HEK293 (cell line): ENCODE measurements at regions of chr7 and their contacts with region 1.

Region 1: DNA sequence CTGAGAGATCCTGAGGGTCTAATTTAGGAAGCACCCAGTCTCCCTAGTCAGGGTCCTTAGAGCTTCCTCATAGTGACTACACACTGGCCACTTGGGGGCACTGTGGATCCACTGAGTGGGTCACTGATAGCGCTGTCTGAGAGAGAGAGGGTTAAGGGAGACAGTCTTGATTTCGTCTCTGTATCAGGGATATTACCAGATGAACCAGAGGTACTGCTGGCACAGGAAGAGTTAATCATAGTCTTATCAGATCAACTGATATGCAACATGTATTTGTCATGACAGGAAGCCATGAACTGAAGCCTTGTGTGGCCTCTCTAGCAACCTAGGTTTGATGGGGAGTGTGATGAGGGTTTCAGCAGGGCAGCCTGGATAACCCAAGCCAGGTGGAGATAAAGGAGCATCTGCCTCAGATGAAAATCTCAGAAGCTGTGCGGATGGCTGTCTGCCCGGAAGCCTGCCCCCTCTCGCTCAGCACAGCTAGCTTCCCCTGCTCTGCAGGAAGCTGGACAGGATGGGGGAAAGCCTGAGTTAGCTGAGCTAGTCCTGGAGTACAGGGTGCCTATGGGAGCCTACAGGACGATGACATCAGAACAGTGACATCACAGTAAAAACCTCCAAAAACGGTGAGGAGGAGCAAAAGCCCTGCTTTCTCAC is 214.0 kb upstream of the PRSS1 start:
- H3K4me3 ChIP-seq: no peak overlapping the region
- H3K27ac ChIP-seq: no peak overlapping the region
- H3K4me1 ChIP-seq: no peaks in the 10 kb centered on the region
- CTCF ChIP-seq: peak; percentile 76

Region 2: DNA sequence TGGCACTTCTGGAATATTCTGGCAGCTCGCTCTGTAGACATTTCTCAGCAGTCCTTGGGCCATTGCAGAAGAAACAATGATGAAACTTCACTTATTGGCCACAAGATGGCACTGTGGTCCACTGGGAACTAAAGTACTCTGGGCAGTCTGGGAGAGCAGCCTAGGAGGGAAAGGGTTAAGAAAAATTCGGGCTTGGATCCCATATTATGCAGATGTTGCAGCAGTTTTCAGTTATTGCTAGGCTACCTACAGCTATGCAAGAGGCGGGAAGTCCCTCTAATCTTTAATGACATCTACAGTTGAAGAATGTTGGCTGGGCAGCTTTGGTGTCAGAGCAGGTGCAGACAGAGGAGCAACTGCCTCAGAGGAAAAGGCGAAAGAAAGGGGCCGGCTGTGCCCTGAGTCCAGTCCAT is 75.7 kb before region 1 on chr7:
- CTCF ChIA-PET with region 1: interaction called, 10 read pairs
- POLR2A ChIA-PET with region 1: no interaction called
- H3K4me3 ChIP-seq: no peak overlapping the region
- H3K27ac ChIP-seq: no peak overlapping the region
- H3K4me1 ChIP-seq: no peaks in the 10 kb centered on the region
- CTCF ChIP-seq: peak; percentile 59; the same call in 1 of the 2 replicates

Region 3: GRCh38 chr7:142523821-142524460 is 11.3 kb before region 1 on chr7:
- CTCF ChIA-PET with region 1: interaction called, 16 read pairs
- POLR2A ChIA-PET with region 1: no interaction called
- H3K4me3 ChIP-seq: no peak overlapping the region
- H3K27ac ChIP-seq: no peak overlapping the region
- H3K4me1 ChIP-seq: no peaks in the 10 kb centered on the region
- CTCF ChIP-seq: no peak

Region 4: GRCh38 chr7:142557971-142558582 is 22.8 kb after region 1 on chr7:
- CTCF ChIA-PET with region 1: interaction called, 18 read pairs
- POLR2A ChIA-PET with region 1: no interaction called
- H3K4me3 ChIP-seq: no peak overlapping the region
- H3K27ac ChIP-seq: no peak overlapping the region
- H3K4me1 ChIP-seq: peaks cover 3% of the 10 kb centered on the region; the same call in 1 of the 2 replicates
- CTCF ChIP-seq: 0 out of 2 replicates have a peak, but pooled peaks have one; percentile 25

Region 5: DNA sequence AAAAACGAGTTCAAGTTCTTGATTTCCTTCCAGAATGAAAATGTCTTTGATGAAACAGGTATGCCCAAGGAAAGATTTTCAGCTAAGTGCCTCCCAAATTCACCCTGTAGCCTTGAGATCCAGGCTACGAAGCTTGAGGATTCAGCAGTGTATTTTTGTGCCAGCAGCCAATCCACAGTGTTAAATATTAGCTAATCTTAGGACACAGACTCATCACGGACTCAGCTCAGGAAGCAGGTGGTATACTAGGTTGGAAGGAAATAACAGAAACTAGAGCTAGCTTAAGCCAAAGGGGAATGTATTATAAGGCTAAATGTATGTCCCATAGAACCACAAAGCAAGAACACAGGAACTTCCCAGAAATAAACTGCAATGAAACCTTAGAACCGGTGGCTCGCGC is 63.0 kb after region 1 on chr7:
- CTCF ChIA-PET with region 1: interaction called, 31 read pairs
- POLR2A ChIA-PET with region 1: no interaction called
- H3K4me3 ChIP-seq: no peak overlapping the region
- H3K27ac ChIP-seq: no peak overlapping the region
- H3K4me1 ChIP-seq: no peaks in the 10 kb centered on the region
- CTCF ChIP-seq: no peak

Region 6: DNA sequence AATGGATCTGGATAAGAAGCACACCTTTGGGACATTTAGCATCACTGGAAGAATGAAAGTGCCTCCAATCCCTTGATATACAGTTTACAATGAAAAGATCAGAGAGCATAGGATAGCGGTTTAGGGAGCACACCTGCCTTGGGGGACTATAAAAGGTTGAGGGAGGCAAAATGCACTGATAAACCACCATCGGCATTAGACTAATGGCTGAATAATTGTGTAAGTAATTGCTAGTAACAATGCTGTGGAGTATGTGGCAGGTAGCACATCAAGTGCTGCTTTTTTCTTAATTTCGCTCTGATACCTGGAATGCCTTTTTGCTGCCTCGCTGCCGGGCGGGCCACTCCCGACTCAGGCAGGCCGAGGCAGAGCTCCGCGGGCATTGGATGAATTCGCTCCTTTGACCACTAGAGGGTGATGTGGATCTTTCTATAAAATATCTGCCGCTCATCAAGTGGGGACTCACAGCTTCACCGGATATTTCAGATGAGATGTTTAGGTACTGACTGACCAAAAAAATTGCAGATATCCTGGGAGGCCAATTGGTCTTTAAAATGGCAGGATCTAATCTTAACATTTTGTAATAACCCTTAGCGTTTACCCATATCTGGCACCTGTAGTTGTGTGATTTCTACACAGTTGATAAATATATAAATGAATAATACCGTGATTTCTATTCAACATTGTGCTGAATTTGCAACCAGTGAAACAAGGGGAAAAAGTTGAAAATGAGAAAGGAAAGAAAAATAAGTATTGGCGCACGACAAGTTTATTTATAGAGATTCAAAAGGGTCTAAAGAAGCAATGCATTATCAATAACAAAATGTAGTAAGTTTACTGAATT is 97.3 kb after region 1 on chr7:
- CTCF ChIA-PET with region 1: interaction called, 12 read pairs
- POLR2A ChIA-PET with region 1: no interaction called
- H3K4me3 ChIP-seq: no peak overlapping the region
- H3K27ac ChIP-seq: no peak overlapping the region
- H3K4me1 ChIP-seq: no peaks in the 10 kb centered on the region
- CTCF ChIP-seq: peak; percentile 51; the same call in 1 of the 2 replicates

Region 7: DNA sequence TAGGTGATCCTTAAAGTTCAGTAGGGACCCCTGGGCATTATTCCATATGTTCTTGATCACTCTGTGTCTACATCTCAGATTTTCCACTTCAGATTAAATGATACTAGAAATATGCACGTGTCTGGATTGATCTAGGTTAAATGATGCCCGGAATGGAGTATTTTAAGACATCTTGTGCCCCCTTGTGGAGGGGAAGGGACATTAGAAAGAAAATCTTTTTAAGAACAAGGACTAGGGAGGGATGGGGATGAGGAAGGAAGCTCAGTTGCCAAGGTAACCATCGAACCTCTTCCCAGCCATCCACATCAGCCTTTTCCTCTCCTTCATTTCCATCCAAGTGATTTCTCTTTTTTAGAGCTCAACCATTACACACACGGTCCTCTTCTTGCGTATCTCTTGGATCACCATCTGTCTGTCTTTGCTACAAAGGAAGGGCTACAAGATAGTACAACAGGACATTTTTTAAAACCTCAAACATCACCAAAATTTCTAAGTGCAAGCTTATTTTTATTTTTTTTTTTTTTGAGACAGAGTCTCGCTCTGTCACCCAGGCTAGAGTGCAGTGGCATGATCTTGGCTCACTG is 276.0 kb after region 1 on chr7:
- CTCF ChIA-PET with region 1: interaction called, 19 read pairs
- POLR2A ChIA-PET with region 1: no interaction called
- H3K4me3 ChIP-seq: no peak overlapping the region
- H3K27ac ChIP-seq: no peak overlapping the region
- H3K4me1 ChIP-seq: no peaks in the 10 kb centered on the region
- CTCF ChIP-seq: no peak; the same call in 1 of the 2 replicates